ENCODE measurements at regions of chr20 and their contacts with region 1.

Region 1: DNA sequence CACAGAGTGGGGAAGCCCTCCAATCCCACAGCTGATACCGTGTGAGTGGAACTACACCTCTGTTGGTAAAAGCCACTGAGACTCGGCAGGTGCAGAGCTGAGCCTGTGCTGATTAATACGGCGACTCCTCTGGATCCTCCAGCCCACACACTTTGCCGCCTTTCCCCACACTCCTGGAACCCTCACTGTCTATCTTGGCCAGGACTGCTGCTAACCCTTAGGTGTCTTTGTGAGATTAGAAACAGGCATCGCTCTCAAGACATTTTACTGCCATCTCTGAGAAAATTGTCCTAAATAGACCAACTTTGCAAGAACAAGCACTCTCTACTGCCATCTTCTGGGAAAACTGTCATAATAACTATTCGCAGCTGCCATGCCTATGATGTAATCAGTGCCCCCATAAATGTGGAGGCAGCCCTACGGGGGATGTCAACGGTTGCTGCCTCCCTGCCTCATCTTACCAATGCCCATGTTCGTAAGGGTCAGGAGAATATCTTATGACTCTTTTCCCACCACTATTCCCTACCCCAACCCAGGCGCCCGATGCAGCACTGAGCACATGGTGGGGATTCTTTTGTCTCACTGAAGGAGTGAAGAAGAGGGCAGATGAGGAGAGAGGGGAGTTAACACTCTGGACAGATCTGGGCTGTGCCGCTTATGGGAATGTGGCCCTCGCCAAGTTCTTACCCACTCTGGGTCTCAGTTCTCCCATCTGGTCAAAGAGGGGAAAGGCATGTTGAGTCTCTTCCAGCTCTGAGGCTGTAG is 26.1 kb upstream of the KCNB1 start:
- DNase-seq: no peak
- H3K4me3 ChIP-seq: no peak overlapping the region
- H3K27ac ChIP-seq: no peak overlapping the region
- H3K4me1 ChIP-seq: no peaks in the 10 kb centered on the region
- H3K27me3 ChIP-seq: no peaks in the 10 kb centered on the region
- CTCF ChIP-seq: peak in 2 of 3 experiments; percentile 63 to 67; a peak in 3 of 4 replicates
- EP300 ChIP-seq: no peak
- POLR2A ChIP-seq: no peak
- RAD21 ChIP-seq: peak; percentile 62 to 73

Region 2: GRCh38 chr20:49328790-49329189 is 179.8 kb before region 1 on chr20:
- CTCF ChIA-PET with region 1: interaction called, 82 read pairs
- POLR2A ChIA-PET with region 1: interaction called, 3 read pairs
- DNase-seq: no peak
- H3K4me3 ChIP-seq: no peak overlapping the region
- H3K27ac ChIP-seq: no peak overlapping the region
- H3K4me1 ChIP-seq: peaks cover 0 to 5% (median 1%) of the 10 kb centered on the region in 4 experiments; a peak in 3 of 7 replicates
- H3K27me3 ChIP-seq: no peaks in the 10 kb centered on the region; a peak in 1 of 7 replicates
- CTCF ChIP-seq: no peak
- EP300 ChIP-seq: no peak
- POLR2A ChIP-seq: no peak
- RAD21 ChIP-seq: no peak

Region 3: GRCh38 chr20:49344975-49345374 is 163.6 kb before region 1 on chr20:
- CTCF ChIA-PET with region 1: interaction called, 13 read pairs
- POLR2A ChIA-PET with region 1: interaction called, 3 read pairs
- DNase-seq: no peak
- H3K4me3 ChIP-seq: no peak overlapping the region
- H3K27ac ChIP-seq: no peak overlapping the region
- H3K4me1 ChIP-seq: no peaks in the 10 kb centered on the region
- H3K27me3 ChIP-seq: no peaks in the 10 kb centered on the region
- CTCF ChIP-seq: no peak
- EP300 ChIP-seq: no peak
- POLR2A ChIP-seq: no peak
- RAD21 ChIP-seq: no peak

Region 4: GRCh38 chr20:49397525-49397924 is 111.1 kb before region 1 on chr20:
- CTCF ChIA-PET with region 1: interaction called, 21 read pairs
- POLR2A ChIA-PET with region 1: no interaction called
- DNase-seq: no peak
- H3K4me3 ChIP-seq: no peak overlapping the region
- H3K27ac ChIP-seq: no peak overlapping the region
- H3K4me1 ChIP-seq: no peaks in the 10 kb centered on the region
- H3K27me3 ChIP-seq: no peaks in the 10 kb centered on the region; a peak in 3 of 7 replicates
- CTCF ChIP-seq: no peak
- EP300 ChIP-seq: no peak
- POLR2A ChIP-seq: no peak
- RAD21 ChIP-seq: no peak

Region 5: GRCh38 chr20:49496553-49497397 is 11.8 kb before region 1 on chr20:
- CTCF ChIA-PET with region 1: interaction called, 24 read pairs
- POLR2A ChIA-PET with region 1: interaction called, 5 read pairs
- DNase-seq: no peak
- H3K4me3 ChIP-seq: no peak overlapping the region
- H3K27ac ChIP-seq: no peak overlapping the region
- H3K4me1 ChIP-seq: no peaks in the 10 kb centered on the region; a peak in 1 of 7 replicates
- H3K27me3 ChIP-seq: no peaks in the 10 kb centered on the region
- CTCF ChIP-seq: no peak
- EP300 ChIP-seq: no peak
- POLR2A ChIP-seq: no peak
- RAD21 ChIP-seq: no peak

Region 6: GRCh38 chr20:49519777-49520359 is 11.3 kb after region 1 on chr20:
- CTCF ChIA-PET with region 1: interaction called, 34 read pairs
- POLR2A ChIA-PET with region 1: no interaction called
- DNase-seq: no peak
- H3K4me3 ChIP-seq: no peak overlapping the region
- H3K27ac ChIP-seq: no peak overlapping the region
- H3K4me1 ChIP-seq: no peaks in the 10 kb centered on the region; a peak in 1 of 7 replicates
- H3K27me3 ChIP-seq: no peaks in the 10 kb centered on the region
- CTCF ChIP-seq: peak; percentile 20 to 38 (median 24)
- EP300 ChIP-seq: no peak
- POLR2A ChIP-seq: no peak
- RAD21 ChIP-seq: peak; percentile 21 to 33; a peak in 3 of 4 replicates

Region 7: GRCh38 chr20:49534255-49534712 is 25.7 kb after region 1 on chr20:
- CTCF ChIA-PET with region 1: interaction called, 29 read pairs
- POLR2A ChIA-PET with region 1: no interaction called
- DNase-seq: peak in 1 of 2 experiments; percentile 85
- H3K4me3 ChIP-seq: no peak overlapping the region
- H3K27ac ChIP-seq: no peak overlapping the region
- H3K4me1 ChIP-seq: no peaks in the 10 kb centered on the region
- H3K27me3 ChIP-seq: no peaks in the 10 kb centered on the region
- CTCF ChIP-seq: peak; percentile 48 to 85 (median 81)
- EP300 ChIP-seq: no peak
- POLR2A ChIP-seq: no peak
- RAD21 ChIP-seq: peak; percentile 73 to 80

Region 8: DNA sequence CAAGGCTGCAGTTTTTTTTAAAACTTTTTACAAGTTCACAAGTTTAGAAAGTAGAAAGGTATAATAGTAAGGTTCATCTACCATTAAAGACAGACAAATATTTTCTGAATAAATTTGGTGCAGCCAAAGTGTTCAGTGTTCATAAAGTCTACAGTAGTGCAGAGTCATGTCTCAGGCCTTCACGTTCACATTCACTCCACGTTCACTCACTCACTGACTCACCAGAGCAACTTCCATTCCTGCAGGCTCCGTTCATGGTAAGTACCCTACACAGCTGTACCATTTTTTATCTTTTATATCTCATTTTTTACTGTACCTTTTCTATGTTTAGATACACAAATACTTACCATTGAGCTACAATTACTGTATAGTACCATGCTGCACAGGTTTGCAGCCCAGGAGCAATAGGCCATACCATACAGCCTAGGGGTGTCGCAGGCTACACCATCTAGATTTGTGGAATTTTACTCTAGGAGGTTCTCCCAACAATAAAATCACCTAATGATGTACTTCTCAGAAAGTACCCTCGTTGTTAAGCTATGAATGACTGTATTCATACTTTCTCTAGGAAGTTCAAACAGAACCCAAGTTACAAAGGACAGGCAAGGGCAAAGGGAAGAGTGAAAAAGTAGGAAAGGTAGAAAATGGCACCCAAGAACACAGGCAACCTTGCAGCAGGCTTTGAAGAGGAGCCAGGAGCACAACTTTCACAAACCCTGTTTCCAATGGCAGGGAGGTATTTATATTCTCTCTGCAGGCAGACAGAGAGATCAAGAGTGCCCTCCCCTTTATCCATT is 137.7 kb after region 1 on chr20:
- CTCF ChIA-PET with region 1: no interaction called
- POLR2A ChIA-PET with region 1: no interaction called
- DNase-seq: no peak
- H3K4me3 ChIP-seq: no peak overlapping the region
- H3K27ac ChIP-seq: no peak overlapping the region
- H3K4me1 ChIP-seq: no peaks in the 10 kb centered on the region
- H3K27me3 ChIP-seq: no peaks in the 10 kb centered on the region
- CTCF ChIP-seq: no peak
- EP300 ChIP-seq: no peak
- POLR2A ChIP-seq: no peak
- RAD21 ChIP-seq: no peak

Measured in H1 (cell line).